ENCODE measurements at regions of chr4 and their contacts with region 1.

Region 1: DNA sequence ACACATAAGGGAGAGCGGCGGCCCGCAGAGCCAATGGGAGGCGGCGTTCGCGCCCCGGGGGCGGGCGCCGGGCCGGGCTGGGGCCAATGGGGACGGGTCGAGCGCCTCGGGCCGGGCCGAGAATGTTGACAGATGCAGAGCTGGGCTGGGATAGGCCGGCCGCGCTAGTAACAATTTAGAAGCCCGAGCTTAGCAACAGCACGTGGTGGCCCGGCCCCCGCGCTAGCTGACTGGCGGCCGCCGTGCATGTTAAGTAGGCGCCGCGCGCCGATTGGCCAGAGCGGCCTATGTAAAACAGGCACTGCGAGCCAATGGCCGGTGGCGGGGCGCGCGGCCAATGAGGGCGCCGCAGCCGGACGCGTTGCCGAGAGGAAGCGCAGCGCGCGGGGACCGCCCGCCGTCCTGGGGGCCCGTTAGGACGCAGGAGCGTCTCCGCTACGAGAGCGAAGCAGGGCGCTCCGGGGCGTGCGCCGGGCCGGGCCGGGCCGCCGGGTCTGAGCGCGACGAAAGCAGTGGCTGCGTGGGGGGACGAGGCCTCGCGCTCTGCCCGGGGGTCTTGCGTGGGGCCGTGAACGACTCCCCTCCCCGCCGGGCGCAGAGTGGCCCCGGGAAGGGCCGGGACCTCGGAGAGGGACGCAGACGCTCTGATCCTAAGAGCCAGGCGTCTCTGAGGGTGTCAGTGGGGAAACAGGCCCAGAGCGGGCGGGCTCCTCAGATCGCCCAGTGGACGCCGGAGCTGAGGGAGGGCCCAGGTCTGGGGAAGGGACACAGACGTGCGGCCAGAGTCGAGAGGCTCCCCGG is 434 bp upstream of the MXD4 start:
- DNase-seq: peak; percentile 99 to 100 (median 100)
- ATAC-seq: peak; percentile 94 to 95 (median 95)
- H3K4me3 ChIP-seq: peak overlapping the region; percentile 12 to 96 (median 86)
- H3K27ac ChIP-seq: peak overlapping the region; percentile 94 to 100 (median 98)
- H3K4me1 ChIP-seq: peaks cover 24 to 82% (median 62%) of the 10 kb centered on the region in 12 donors
- H3K27me3 ChIP-seq: no peaks in the 10 kb centered on the region
- CTCF ChIP-seq: no peak
- POLR2A ChIP-seq: peak; percentile 90 to 99

Region 2: GRCh38 chr4:2080429-2081300 is 181.7 kb before region 1 on chr4:
- intact Hi-C with region 1: no loop called
- DNase-seq: peak in 2 of 5 donors; percentile 14 to 59
- ATAC-seq: peak in 2 of 4 donors; percentile 14 to 33
- H3K4me3 ChIP-seq: no peak overlapping the region
- H3K27ac ChIP-seq: no peak overlapping the region
- H3K4me1 ChIP-seq: no peaks in the 10 kb centered on the region
- H3K27me3 ChIP-seq: no peaks in the 10 kb centered on the region
- CTCF ChIP-seq: no peak
- POLR2A ChIP-seq: no peak

Region 3: GRCh38 chr4:2101346-2102044 is 160.8 kb before region 1 on chr4:
- intact Hi-C with region 1: no loop called
- DNase-seq: no peak
- ATAC-seq: no peak
- H3K4me3 ChIP-seq: no peak overlapping the region
- H3K27ac ChIP-seq: no peak overlapping the region
- H3K4me1 ChIP-seq: no peaks in the 10 kb centered on the region
- H3K27me3 ChIP-seq: peaks cover 0 to 28% (median 0%) of the 10 kb centered on the region in 9 donors
- CTCF ChIP-seq: no peak
- POLR2A ChIP-seq: no peak

Region 4: DNA sequence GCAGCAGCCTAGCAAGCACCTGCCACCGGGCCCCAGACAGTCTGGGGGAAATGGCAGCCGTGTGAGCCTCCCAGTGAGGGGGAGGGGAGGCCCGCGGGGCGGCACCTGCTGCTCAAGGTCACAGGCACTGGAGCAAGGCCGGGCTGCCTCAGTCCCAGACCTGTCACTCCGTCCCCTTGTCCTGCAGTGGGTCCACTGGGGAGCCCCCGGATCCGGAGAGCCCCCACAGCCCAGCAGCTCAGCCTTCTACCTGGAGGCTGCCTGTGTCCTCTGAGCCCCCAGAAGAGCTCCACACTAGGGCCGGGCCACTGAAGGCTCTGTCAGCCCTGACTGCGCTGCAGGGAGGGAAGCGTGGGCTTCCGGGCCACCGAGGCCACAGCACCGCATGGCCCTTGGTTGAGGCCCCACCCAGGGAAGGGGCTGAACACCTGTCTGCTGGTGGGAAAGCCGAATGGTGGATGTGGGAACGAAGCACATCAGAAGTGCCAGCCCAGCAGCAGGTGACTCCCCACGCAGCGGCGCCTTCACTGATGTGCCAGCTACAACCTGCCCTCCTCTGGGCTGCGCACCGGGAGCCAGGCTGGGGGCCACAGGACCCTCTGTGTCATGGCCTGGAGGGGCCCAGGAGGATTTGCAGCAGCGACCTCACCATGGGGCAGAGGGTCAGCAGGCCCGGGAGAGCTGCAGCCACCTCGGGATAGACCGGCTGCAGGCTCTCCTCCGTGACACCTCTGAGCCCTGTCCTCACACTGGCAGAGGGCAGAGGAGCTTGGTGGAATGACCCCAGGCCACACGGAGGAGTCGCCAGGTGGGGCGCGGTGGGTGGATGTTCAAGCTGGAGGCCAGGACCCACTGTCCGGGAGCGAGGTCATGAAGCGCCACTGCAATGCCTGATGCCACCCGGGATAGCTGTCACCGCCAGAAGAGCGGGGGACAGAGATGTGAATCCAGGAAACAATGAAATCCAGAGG is 34.6 kb after region 1 on chr4:
- intact Hi-C with region 1: no loop called
- DNase-seq: peak in 1 of 5 donors; percentile 36
- ATAC-seq: peak; percentile 37 to 59 (median 52)
- H3K4me3 ChIP-seq: no peak overlapping the region
- H3K27ac ChIP-seq: no peak overlapping the region
- H3K4me1 ChIP-seq: peaks cover 0 to 12% (median 0%) of the 10 kb centered on the region in 12 donors
- H3K27me3 ChIP-seq: no peaks in the 10 kb centered on the region
- CTCF ChIP-seq: no peak
- POLR2A ChIP-seq: no peak

Region 5: GRCh38 chr4:2412885-2413716 is 150.8 kb after region 1 on chr4:
- intact Hi-C with region 1: loop called in 8 of 10 experiments (anchors 5 to 10 kb)
- DNase-seq: peak; percentile 75 to 88 (median 83)
- ATAC-seq: peak; percentile 91 to 95 (median 92)
- H3K4me3 ChIP-seq: peak overlapping the region in 9 of 12 donors; percentile 18 to 45 (median 27)
- H3K27ac ChIP-seq: peak overlapping the region in 11 of 12 donors; percentile 30 to 92 (median 59)
- H3K4me1 ChIP-seq: peaks cover 0 to 61% (median 32%) of the 10 kb centered on the region in 12 donors
- H3K27me3 ChIP-seq: peaks cover 0 to 20% (median 0%) of the 10 kb centered on the region in 9 donors
- CTCF ChIP-seq: peak in 11 of 12 donors; percentile 23 to 58 (median 34)
- POLR2A ChIP-seq: peak in 1 of 2 donors; percentile 31

Region 6: DNA sequence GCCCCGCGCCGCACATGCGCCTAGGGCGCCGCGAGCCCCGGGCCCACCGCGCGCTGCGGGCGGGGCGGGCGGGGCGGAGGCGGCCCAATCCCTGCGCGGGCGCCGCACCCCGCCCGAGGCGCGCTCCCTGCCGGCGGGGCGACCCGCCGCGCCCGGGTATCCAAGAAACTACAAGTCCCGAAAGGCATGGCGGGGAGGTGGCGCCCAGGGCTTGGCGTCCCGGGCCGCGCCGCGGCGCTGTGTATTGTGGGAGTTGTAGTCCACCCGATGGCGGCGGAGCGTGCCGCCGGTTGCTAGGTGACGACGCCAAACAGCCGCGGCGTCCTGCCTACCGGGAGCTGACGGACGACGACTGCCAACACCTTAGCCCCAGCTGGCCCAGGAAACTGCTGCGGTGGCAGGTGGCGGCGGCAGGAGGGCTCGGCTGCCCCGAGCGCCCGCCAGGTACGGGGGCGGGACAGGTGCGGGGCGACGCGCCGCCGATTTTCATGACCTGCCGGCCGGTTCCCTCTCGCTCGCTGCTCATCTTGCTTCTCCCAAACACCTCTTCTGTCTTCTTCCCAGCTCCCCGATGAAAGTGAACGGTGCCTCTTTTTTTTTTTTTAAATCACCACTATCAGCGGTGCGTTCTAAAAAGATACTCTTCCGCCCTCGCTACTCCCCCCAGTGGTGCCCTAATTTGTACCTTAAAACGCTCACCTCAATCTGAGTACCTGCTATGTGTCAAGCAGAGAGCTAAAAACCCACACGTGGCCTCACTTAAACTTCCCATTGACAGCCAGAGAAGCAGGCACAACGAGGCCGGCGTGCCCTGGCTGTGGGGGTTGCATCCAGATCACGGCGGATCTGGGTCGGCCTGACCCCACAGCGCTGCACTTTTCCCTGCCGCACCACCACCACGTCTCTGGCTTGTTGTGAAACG is 156.6 kb after region 1 on chr4 and contains the start of gene CFAP99:
- intact Hi-C with region 1: loop called in 9 of 10 experiments (anchors 5 to 10 kb)
- DNase-seq: peak; percentile 97 to 99 (median 98)
- ATAC-seq: peak; percentile 95 to 98 (median 96)
- H3K4me3 ChIP-seq: peak within 1 kb of the TSS; percentile 48 to 84 (median 70)
- H3K27ac ChIP-seq: peak within 1 kb of the TSS in 7 of 12 donors; percentile 15 to 39 (median 24)
- H3K4me1 ChIP-seq: peaks cover 5 to 42% (median 22%) of the 10 kb centered on the region in 12 donors
- H3K27me3 ChIP-seq: peaks cover 0 to 41% (median 16%) of the 10 kb centered on the region in 9 donors
- CTCF ChIP-seq: peak in 7 of 12 donors; percentile 6 to 45 (median 23)
- POLR2A ChIP-seq: peak in 1 of 2 donors; percentile 3
- total RNA-seq, gene CFAP99: not detected

Region 7: GRCh38 chr4:2424581-2424980 is 162.2 kb after region 1 on chr4:
- intact Hi-C with region 1: loop called in 8 of 10 experiments (anchors 5 to 10 kb)
- DNase-seq: peak in 1 of 5 donors; percentile 35
- ATAC-seq: no peak
- H3K4me3 ChIP-seq: no peak overlapping the region
- H3K27ac ChIP-seq: no peak overlapping the region
- H3K4me1 ChIP-seq: peaks cover 0 to 4% (median under 1%) of the 10 kb centered on the region in 12 donors
- H3K27me3 ChIP-seq: peaks cover 0 to 19% (median 16%) of the 10 kb centered on the region in 9 donors
- CTCF ChIP-seq: no peak
- POLR2A ChIP-seq: no peak

Measured in heart left ventricle (tissue), 16 donors.